ENCODE measurements at regions of chr22 and their contacts with region 1.

Region 1: DNA sequence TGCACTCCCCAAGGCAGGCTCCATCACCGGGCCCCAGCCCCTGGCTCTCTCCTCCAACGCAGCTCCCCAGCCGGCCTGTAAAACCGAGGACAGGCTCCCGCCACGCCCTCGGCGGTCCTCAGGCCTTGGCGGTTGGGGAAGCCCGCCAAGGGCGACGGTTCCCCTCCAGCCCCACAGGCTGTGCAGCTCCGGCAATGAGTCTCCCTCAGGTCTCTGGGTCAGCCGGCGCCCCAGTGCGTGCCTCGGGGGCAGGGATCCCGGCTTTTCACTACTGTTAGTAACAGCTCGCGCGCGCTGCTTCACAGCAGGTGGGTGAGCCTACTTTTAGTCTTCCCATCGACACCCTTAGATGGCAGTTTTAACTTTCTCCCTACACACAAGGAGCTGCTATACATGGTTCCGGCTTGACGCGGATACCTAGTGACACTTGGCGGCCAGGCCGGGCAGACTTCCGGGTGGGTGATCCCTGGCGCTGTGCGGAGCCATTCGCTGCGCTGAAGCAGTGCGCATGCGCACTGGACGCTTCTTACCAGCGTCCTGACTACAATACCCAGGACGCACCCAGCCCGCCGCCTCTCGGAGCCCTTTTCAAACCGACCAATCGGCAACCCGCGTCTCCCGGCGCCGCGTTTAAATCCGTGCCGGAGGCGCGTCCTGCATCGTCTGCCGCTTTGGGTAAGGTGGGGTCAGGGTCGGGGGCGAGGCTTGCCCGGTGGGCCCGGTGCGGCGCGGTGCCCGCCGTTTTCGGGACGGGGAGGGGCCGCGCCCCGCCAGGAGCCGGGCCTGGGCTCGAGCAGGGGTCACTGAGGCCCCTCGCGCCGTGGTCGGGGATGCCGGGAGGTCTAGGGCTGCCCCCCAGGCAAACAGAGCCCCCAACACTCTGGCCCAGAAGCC is at the start of gene GTSE1:
- DNase-seq: peak; percentile 98
- ATAC-seq: peak; percentile 98
- total RNA-seq, gene GTSE1: 0.49 TPM

Region 2: DNA sequence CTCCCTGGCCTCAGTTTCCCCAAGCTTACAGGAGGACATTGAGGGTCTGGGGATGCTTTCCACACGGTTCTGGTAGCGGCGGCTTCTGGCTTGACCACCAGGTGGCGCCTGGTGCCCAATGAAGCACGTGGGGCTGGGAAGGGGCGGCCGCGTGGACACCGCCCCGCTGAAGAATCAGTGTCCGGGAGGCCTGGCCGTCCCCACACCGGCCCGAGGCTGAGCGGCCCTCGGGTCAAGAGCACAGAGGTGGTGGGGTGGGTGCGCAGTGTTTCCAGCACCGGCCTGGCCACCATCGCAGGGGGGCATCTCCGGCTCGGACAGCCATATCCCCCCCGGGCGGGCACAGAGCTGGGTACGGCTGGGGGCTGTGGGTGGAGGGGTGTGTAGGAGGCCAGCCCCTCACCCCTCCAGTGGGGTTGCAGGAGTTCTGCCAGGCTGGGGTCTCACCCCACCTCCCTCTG is 174.0 kb before region 1 on chr22:
- intact Hi-C with region 1: loop called (anchors 5 kb)
- DNase-seq: peak; percentile 92
- ATAC-seq: peak; percentile 58

Region 3: GRCh38 chr22:46245511-46245910 is 51.0 kb before region 1 on chr22:
- intact Hi-C with region 1: no loop called
- DNase-seq: no peak
- ATAC-seq: peak; percentile 52

Region 4: GRCh38 chr22:46355371-46355995 is 59.0 kb after region 1 on chr22:
- intact Hi-C with region 1: loop called (anchors 10 kb)
- DNase-seq: peak; percentile 83
- ATAC-seq: peak; percentile 59

Region 5: GRCh38 chr22:46390652-46391301 is 94.3 kb after region 1 on chr22:
- intact Hi-C with region 1: no loop called
- DNase-seq: peak; percentile 82
- ATAC-seq: peak; percentile 87

Measured in sciatic nerve (tissue), 2 donors.